ENCODE measurements at regions of chr11 and their contacts with region 1.

Region 1: DNA sequence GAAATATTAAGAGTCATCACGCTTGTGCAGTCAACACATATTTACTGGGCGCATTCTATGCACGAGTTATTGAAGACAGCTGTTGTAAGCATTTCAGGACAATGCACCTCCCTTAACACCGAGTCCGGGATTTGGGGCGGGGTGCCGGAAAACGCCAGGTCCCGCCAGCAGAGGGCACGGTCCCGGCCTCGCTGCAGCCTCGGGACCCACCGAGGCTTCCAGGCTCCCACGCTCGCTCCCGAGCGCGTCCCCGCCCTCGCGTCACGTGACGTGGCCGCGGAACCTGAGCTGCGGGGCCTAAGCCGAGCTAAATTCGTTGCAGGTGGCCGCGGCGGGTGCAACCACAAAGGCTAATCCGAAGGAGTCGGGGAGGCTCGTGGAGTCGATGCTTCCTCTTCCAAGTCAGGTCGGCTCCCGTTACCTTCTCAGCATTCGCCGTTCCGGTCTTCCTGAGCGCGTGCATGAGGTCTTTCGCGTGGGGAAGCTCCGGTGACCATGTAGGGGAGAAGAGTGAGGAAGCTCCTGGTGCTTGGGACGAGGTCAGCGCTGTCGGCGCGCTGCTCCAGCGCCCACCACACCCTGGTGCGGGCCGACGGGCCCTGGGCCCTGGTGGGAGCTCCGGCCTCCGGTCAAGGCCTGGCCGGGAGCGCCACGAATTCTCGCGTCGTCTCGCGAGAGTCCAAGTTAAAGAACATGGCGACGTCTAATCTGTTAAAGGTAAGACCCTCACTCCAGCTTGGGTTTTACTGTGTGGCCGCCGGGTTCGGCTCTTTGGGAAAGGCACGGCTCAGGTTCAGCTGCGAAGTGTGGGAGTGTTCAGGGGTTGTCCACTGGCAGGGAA is at the start of gene CUL5:
- DNase-seq: peak; percentile 83
- H3K4me3 ChIP-seq: peak within 1 kb of the TSS; percentile 100
- H3K27ac ChIP-seq: peak within 1 kb of the TSS; percentile 97
- H3K27me3 ChIP-seq: no peaks in the 10 kb centered on the region
- CTCF ChIP-seq: peak; percentile 90
- polyA plus RNA-seq, gene CUL5: 17.1 and 26.0 TPM in 2 replicates

Region 2: DNA sequence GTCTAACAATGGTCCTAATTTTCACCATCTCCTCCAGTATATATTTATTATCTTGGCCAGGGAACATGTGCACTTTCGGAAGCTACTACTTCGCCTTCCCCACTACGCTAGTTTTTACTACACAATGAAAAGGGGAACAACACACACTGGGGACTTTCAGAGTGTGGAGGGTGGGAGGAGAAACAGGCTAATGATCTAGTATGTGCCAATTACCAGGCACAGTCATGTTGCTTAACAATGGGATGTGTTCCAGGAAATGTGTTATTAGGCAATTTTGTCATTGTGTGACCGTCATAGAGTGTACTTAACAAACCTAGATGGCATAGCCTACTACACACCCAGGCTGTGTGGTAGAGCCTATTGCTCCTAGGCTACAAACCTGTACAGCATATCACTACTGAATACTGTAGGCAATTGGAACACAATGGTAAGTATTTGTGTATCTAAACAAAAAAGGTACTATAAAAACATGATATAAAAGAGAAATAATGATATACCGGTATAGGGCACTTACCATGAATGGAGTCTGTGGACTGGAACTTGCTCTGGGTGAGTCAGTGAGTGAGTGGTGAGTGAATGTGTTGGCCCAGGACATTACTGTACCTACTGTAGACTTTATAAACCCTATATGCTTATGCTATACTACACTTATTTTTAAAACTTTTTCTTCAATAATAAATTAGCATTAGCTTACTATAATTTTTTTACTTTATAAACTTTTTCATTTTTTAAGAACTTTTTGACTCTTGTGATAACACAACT is 20.3 kb before region 1 on chr11:
- CTCF ChIA-PET with region 1: no interaction called
- POLR2A ChIA-PET with region 1: no interaction called
- DNase-seq: no peak
- H3K4me3 ChIP-seq: no peak overlapping the region
- H3K27ac ChIP-seq: no peak overlapping the region
- H3K27me3 ChIP-seq: no peaks in the 10 kb centered on the region
- CTCF ChIP-seq: no peak

Region 3: DNA sequence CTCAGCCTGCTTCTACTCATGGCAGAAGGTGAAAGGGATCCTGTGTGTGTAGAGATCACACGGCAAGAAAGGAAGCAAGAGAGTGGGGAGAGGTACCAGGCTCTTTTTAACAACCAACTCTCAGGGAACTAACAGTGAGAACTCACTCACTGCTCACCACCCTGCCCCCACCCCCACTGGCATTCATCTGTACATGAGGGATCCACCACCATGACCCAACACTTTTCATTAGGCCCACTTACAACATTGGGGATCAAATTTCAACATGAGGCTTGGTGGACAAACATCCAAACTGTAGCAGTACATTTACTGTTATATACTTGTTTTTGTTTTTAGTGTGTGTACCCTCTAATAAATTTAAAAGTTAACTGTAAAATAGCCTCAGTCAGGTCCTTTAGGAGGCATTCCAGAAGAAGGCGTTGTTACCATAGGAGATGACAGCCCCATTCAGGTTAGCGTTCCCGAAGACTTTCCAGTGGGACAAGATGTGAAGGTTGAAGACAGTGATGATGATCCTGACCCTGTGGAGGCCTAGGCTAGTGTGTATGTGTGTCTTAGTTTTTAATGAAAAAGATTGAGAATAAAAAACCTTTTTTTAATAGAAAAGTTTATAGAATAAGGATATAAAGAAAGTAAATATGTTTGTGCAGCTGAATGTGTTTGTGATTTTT is 11.1 kb after region 1 on chr11:
- CTCF ChIA-PET with region 1: interaction called, 14 read pairs
- POLR2A ChIA-PET with region 1: interaction called, 3 read pairs
- DNase-seq: no peak
- H3K4me3 ChIP-seq: no peak overlapping the region
- H3K27ac ChIP-seq: no peak overlapping the region
- H3K27me3 ChIP-seq: no peaks in the 10 kb centered on the region
- CTCF ChIP-seq: no peak

Region 4: GRCh38 chr11:108037636-108038035 is 28.8 kb after region 1 on chr11:
- CTCF ChIA-PET with region 1: interaction called, 18 read pairs
- POLR2A ChIA-PET with region 1: interaction called, 10 read pairs
- DNase-seq: peak; percentile 21
- H3K4me3 ChIP-seq: no peak overlapping the region
- H3K27ac ChIP-seq: peak overlapping the region; percentile 42
- H3K27me3 ChIP-seq: no peaks in the 10 kb centered on the region
- CTCF ChIP-seq: no peak

Region 5: DNA sequence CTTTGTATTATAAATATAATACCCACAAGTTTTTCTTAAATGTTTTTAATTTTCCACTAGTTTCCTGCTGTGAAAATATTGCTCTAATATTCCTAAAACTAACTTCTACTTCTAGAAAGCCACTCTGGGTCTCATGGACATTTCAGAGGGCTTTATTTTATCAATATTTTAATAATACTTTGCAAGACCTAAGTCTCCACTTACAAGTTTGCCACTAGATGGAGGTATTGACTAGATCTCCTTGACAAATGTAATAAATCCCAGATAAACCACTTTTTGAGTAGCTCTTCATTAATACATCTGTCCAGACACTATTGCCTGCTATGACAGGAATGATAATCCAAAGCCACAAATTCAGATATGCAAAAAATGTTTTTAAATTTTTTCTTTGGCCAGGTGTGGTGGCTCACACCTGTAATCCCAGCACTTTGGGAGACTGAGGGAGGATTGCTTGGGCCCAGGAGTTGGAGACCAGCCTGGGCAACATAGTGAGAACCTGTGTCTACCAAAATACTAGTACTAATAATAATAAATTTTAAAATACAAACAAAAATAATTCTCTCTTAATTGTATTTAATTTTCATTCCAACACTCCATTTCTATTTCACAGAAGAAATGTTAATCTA is 109.0 kb after region 1 on chr11:
- CTCF ChIA-PET with region 1: interaction called, 12 read pairs
- POLR2A ChIA-PET with region 1: no interaction called
- DNase-seq: peak; percentile 34
- H3K4me3 ChIP-seq: no peak overlapping the region
- H3K27ac ChIP-seq: no peak overlapping the region
- H3K27me3 ChIP-seq: no peaks in the 10 kb centered on the region
- CTCF ChIP-seq: peak; percentile 68